Psoas muscle (tissue), 8 donors: ENCODE measurements at regions of chr9 and their contacts with region 1.

Region 1: DNA sequence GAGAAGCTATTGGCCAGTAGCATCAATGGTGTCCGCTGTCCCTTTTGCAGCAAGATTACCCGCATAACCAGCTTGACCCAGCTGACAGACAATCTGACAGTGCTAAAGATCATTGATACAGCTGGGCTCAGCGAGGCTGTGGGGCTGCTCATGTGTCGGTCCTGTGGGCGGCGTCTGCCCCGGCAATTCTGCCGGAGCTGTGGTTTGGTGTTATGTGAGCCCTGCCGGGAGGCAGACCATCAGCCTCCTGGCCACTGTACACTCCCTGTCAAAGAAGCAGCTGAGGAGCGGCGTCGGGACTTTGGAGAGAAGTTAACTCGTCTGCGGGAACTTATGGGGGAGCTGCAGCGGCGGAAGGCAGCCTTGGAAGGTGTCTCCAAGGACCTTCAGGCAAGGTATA is 10.8 kb downstream of the TRIM32 start:
- DNase-seq: peak in 1 of 2 donors; percentile 44
- ATAC-seq: no peak
- H3K4me3 ChIP-seq: no peak overlapping the region
- H3K27ac ChIP-seq: no peak overlapping the region
- H3K4me1 ChIP-seq: peaks cover 48% of the 10 kb centered on the region
- H3K27me3 ChIP-seq: no peaks in the 10 kb centered on the region
- CTCF ChIP-seq: no peak

Region 2: GRCh38 chr9:116629634-116630033 is 68.3 kb before region 1 on chr9:
- intact Hi-C with region 1: loop called in 1 of 2 experiments (anchors 2 kb)
- DNase-seq: no peak
- ATAC-seq: no peak
- H3K4me3 ChIP-seq: no peak overlapping the region
- H3K27ac ChIP-seq: no peak overlapping the region
- H3K4me1 ChIP-seq: no peaks in the 10 kb centered on the region
- H3K27me3 ChIP-seq: no peaks in the 10 kb centered on the region
- CTCF ChIP-seq: no peak